Activated B cell treated with CpG ODN at 0.5 μM for 24 hours (primary cell): ENCODE measurements at regions of chr1 and their contacts with region 1.

Region 1: GRCh38 chr1:226078374-226078773 is 15.9 kb downstream of the H3-3A start:
- DNase-seq: no peak
- ATAC-seq: no peak
- H3K4me3 Mint-ChIP-seq: no peak overlapping the region
- H3K27ac Mint-ChIP-seq: no peak overlapping the region
- H3K4me1 Mint-ChIP-seq: peaks cover 10% of the 10 kb centered on the region
- H3K27me3 Mint-ChIP-seq: no peaks in the 10 kb centered on the region
- CTCF ChIP-seq: no peak

Region 2: DNA sequence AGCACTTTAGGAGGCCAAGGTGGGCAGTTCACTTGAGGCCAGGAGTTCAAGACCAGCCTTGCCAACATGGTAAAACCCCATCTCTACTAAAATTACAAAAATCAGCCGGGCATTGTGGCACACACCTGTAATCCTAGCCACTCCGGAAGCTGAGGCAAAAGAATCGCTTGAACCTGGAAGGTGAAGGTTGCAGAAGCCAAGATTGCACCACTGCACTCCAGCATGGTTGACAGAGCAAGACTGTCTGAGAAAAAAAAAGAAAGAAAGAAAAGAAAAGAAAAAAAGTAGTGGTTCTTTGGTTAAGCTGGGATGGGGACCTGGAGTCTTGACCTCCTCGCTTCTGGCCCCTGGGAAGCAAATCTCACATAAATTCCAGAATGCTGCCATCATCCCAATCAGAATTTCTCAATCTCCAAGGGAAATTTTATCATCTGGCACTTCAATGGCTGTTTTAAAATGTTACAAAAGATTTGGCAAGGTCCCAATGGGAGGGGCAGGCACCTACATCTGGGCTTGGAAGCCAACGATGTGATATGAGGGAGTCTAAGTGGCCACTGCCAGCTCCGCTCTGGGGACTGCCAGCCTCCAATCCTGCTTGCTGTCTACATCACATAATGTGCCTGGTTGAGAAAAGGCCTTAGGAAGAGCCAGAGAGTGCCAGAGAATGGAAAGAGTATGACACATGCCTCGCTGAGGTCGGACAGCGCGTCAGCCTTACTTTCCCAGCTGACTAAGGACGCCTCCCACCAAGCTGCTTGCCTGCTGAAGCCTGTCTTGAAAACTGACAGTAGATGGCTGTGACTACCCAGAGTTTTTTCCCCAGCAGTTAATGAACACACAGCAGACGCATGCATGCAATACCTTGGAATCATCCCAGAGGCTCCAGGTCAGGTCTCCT is 342.9 kb before region 1 on chr1:
- CTCF ChIA-PET with region 1: no interaction called
- POLR2A ChIA-PET with region 1: no interaction called
- intact Hi-C with region 1: no loop called
- DNase-seq: no peak
- ATAC-seq: no peak
- H3K4me3 Mint-ChIP-seq: no peak overlapping the region
- H3K27ac Mint-ChIP-seq: no peak overlapping the region
- H3K4me1 Mint-ChIP-seq: no peaks in the 10 kb centered on the region
- H3K27me3 Mint-ChIP-seq: no peaks in the 10 kb centered on the region
- CTCF ChIP-seq: no peak

Region 3: DNA sequence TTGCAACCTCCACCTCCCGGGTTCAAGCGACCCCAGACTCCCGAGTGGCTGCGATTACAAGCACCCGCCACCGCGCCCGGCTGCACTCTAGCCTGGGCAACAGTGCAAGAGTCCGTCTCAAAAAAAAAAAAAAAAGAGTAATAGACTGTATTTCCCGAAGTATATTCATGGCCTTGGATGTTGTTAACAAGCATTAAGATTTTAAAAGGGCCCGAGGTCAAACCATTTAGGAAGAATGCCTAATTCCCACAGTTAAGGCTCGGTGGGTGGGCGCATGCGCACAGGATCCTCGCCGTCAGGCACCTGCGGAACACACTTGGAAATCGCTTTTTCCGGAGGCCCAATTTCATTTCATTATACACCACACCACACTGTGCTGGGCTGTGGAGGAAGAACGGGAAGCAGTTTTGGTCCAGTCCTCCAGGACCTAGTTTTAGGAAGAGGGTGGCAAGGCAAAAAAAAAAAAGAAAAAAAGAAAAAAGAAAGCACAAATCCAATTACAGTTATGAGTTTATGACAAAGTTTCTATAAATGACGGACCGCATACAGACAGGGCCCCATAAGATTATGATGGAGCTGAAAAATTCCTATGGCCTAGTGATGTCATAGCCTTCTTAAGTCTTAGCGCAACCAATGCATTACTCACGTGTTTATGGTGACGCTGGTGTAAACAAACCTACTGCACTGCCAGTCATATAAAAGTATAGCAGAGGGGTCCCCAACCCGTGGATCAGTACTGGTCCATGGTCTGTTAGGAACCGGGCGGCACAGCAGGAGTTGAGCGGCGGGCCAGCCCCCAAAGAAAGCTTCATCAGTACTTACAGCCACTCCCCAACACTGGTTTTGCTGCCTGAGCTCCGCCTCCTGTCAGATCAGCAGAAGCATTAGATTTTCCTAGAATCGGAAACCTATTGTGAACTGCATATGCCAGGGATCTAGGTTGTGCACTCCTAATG is 22.3 kb after region 1 on chr1:
- CTCF ChIA-PET with region 1: interaction called, 3 read pairs
- POLR2A ChIA-PET with region 1: interaction called, 15 read pairs
- intact Hi-C with region 1: loop called (anchors 1 kb)
- DNase-seq: no peak
- ATAC-seq: peak; percentile 67
- H3K4me3 Mint-ChIP-seq: peak overlapping the region; percentile 87
- H3K27ac Mint-ChIP-seq: no peak overlapping the region
- H3K4me1 Mint-ChIP-seq: peaks cover 13% of the 10 kb centered on the region
- H3K27me3 Mint-ChIP-seq: no peaks in the 10 kb centered on the region
- CTCF ChIP-seq: no peak

Region 4: DNA sequence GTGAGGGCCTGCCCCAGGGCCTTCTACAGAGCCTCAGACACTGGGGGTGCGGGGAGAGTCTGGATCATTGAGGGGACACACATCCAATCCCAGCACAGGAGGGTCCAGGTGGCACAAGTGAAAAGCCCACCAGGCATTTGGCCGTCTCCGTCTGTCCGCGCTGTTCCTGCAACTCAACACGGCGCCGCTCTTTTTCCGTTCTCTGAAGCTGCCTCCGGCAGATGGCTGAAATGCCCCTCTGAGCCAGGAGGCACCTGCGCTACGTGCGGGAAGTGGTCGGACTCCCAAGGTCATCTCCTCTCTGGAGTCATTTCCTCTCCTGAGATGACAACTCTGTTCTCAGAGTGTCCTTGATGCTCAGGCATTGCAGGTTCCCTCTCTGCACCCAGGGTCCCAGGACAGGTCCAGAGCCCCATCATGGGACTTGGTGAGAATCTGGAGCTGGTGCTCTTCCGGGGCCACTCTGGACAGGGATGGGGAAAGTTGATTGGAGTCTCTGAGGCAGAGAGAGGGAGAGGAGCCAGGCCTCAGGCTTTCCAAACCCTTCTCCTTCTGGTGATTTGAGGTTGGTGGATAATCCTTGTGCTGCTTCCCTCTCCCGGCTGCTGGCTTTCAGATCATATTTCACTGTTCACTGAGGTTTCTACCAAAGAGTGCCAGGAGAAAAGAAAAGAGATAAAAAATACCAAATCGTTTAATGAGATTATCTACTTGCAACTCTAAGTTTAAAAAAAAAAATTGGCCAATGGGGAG is 131.1 kb after region 1 on chr1:
- CTCF ChIA-PET with region 1: no interaction called
- POLR2A ChIA-PET with region 1: no interaction called
- intact Hi-C with region 1: no loop called
- DNase-seq: no peak
- ATAC-seq: no peak
- H3K4me3 Mint-ChIP-seq: no peak overlapping the region
- H3K27ac Mint-ChIP-seq: no peak overlapping the region
- H3K4me1 Mint-ChIP-seq: no peaks in the 10 kb centered on the region
- H3K27me3 Mint-ChIP-seq: no peaks in the 10 kb centered on the region
- CTCF ChIP-seq: no peak